ENCODE measurements at regions of chr9 and their contacts with region 1.

Region 1: DNA sequence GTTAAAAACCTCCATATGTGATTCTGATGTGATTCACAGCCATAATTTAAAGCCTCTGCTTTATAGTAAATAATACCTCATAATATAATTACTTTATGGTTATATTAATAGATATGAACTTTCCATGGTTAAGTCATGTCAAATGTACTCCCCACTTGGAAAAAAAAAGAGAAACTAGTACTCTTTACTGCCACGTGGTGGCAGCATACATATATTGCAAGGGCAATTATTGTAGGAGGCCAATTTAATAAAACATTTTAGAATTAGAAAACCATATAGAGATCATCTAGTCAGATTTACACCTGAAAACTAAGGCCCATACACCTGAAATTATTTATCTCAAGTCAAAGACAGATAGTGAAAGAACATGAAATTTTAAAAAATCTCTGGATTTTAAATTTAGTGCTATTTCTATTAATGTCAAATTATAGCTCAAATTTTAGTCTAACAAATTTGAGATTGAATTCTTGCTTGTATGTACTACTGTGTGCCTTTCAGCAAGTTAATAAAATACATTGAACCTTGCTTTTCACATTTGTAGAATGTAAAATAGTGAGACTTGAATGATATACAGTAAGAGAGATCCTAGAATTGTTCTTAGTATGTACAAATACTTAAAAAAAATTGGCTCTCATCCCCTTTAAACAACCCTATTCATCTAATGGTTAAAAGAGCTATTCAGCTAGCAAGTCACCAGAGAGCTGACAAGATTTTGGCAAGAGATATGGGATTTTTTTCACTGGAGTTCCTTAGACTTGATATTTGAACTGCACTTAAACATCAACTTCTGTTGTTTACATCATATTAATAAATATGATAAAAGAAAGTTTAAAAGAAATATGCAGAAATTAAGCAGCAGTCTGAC is 603.8 kb downstream of the TLE4 start:
- DNase-seq: peak; percentile 62
- ATAC-seq: no peak
- H3K4me3 ChIP-seq: no peak overlapping the region
- H3K4me3 Mint-ChIP-seq: no peak overlapping the region
- H3K27ac ChIP-seq: no peak overlapping the region
- H3K27ac Mint-ChIP-seq: no peak overlapping the region
- H3K4me1 ChIP-seq: no peaks in the 10 kb centered on the region
- H3K4me1 Mint-ChIP-seq: no peaks in the 10 kb centered on the region
- H3K27me3 ChIP-seq: no peaks in the 10 kb centered on the region
- H3K27me3 Mint-ChIP-seq: no peaks in the 10 kb centered on the region
- CTCF ChIP-seq: peak; percentile 90

Region 2: DNA sequence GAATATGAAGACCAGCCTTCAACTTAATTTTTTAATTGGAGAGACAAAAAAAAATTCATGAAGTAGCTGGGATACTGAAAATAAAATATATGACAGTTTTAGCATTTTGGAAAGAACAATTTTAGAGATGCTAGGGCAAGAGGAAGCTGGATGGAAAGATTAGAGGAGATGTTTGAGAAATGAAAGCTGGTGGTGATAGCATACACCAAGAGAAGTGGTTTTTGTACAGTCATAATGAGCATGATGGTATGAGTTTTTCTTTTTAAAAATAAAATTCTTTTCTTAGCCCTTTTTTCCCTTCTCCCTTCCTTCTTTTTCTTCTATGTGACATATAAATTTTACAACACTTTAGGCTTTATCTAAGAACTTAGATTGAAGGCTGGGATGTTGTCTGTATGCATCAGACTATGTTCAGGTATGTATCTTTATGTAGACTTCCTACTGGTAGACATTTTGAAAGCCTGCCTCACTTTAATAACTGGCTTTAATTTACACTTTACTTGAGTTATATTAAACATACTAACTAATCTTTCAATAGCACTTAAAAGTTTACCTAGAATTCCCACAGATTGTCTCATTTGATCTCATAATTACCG is 81.2 kb before region 1 on chr9:
- CTCF ChIA-PET with region 1: no interaction called
- POLR2A ChIA-PET with region 1: no interaction called
- intact Hi-C with region 1: no loop called
- DNase-seq: no peak
- ATAC-seq: no peak
- H3K4me3 ChIP-seq: no peak overlapping the region
- H3K4me3 Mint-ChIP-seq: no peak overlapping the region
- H3K27ac ChIP-seq: no peak overlapping the region
- H3K27ac Mint-ChIP-seq: no peak overlapping the region
- H3K4me1 ChIP-seq: no peaks in the 10 kb centered on the region
- H3K4me1 Mint-ChIP-seq: peaks cover 7% of the 10 kb centered on the region
- H3K27me3 ChIP-seq: no peaks in the 10 kb centered on the region
- H3K27me3 Mint-ChIP-seq: no peaks in the 10 kb centered on the region
- CTCF ChIP-seq: no peak

Region 3: DNA sequence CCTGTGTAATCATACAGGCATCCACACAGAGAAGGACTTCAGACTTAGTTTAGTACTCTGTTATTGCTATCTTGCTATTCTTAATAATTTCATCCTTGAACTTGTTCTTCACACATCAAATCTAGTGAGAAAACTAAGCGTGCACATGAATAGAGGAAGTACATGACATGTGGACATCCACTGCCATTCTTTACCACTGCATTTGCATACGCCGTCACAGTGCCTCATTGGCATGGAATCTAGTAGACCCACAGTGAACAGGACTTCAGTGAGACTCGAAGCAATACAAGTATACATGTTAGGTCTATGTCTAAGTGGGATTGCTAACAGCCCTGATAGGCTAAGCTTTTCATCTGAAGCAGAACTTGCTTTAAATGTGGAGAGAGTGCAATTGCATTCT is 11.6 kb before region 1 on chr9:
- CTCF ChIA-PET with region 1: interaction called, 11 read pairs
- POLR2A ChIA-PET with region 1: no interaction called
- intact Hi-C with region 1: no loop called
- DNase-seq: peak; percentile 73
- ATAC-seq: peak; percentile 81
- H3K4me3 ChIP-seq: peak overlapping the region in 1 of 5 experiments; percentile 19
- H3K4me3 Mint-ChIP-seq: no peak overlapping the region
- H3K27ac ChIP-seq: no peak overlapping the region
- H3K27ac Mint-ChIP-seq: peak overlapping the region; percentile 26
- H3K4me1 ChIP-seq: peaks cover 9 to 11% of the 10 kb centered on the region in 2 donors
- H3K4me1 Mint-ChIP-seq: peaks cover 15% of the 10 kb centered on the region
- H3K27me3 ChIP-seq: no peaks in the 10 kb centered on the region
- H3K27me3 Mint-ChIP-seq: no peaks in the 10 kb centered on the region
- CTCF ChIP-seq: no peak